ENCODE measurements at regions of chr3 and their contacts with region 1.

Region 1: GRCh38 chr3:37210230-37210629 is 35.8 kb upstream of the LRRFIP2 start:
- DNase-seq: no peak
- ATAC-seq: no peak
- H3K4me3 ChIP-seq: no peak overlapping the region
- H3K4me3 Mint-ChIP-seq: no peak overlapping the region
- H3K27ac ChIP-seq: no peak overlapping the region
- H3K27ac Mint-ChIP-seq: no peak overlapping the region
- H3K4me1 ChIP-seq: peaks cover under 1% of the 10 kb centered on the region
- H3K4me1 Mint-ChIP-seq: no peaks in the 10 kb centered on the region
- H3K27me3 ChIP-seq: no peaks in the 10 kb centered on the region
- H3K27me3 Mint-ChIP-seq: no peaks in the 10 kb centered on the region
- CTCF ChIP-seq: no peak

Region 2: GRCh38 chr3:37024092-37024491 is 186.1 kb before region 1 on chr3:
- intact Hi-C with region 1: loop called (anchors 1 kb)
- DNase-seq: peak in 1 of 2 donors; percentile 33
- ATAC-seq: peak in 2 of 3 donors; percentile 50 to 69
- H3K4me3 ChIP-seq: no peak overlapping the region
- H3K4me3 Mint-ChIP-seq: no peak overlapping the region
- H3K27ac ChIP-seq: no peak overlapping the region
- H3K27ac Mint-ChIP-seq: peak overlapping the region; percentile 23 to 24
- H3K4me1 ChIP-seq: no peaks in the 10 kb centered on the region
- H3K4me1 Mint-ChIP-seq: peaks cover 0 to 10% of the 10 kb centered on the region in 2 donors
- H3K27me3 ChIP-seq: no peaks in the 10 kb centered on the region
- H3K27me3 Mint-ChIP-seq: no peaks in the 10 kb centered on the region
- CTCF ChIP-seq: no peak

Measured in natural killer cell (primary cell).